B cell (primary cell): ENCODE measurements at regions of chr17 and their contacts with region 1.

Region 1: DNA sequence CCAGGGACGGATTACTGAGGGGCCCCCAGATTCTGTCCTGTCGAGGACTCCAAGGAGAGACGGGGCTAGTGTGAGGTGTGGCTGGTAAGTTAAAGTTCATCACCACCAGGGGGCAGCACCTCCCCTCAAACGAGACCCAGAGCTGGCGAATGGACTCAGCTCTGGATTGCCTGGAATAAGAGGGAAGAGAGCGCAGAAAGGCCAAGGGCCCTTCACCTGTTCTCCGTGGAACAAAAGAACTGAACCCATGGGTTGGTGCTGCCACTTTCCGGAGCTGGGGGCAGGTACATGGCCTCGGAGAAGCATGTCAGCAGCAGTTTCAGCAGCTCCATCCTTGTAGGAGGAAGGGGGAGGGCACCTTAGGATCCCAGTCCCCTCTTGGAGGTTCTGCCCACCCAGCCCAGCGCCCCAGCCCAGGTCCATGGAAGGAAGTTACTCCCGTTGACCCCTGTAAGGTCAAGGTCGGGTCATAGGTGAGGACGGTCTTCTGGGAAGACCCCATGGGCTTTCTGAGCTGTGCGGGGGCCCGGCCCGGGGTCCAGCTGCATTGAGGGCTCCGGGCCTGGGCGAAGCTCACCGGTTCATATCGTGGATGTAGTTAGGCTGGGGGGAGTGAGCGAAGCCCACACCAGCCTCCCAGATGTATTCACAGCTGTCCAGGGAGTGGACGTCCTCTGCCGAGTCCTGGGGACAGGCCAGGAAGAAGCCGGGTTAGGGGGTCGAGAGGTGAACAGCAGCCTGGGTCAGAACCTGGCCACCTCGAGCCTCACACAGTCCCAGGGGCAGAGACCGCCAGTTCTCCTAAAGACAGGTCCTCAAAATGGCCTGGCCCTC is 10.7 kb downstream of the HID1 start:
- DNase-seq: peak; percentile 87
- ATAC-seq: peak; percentile 72
- H3K4me3 ChIP-seq: no peak overlapping the region
- H3K4me3 Mint-ChIP-seq: no peak overlapping the region
- H3K27ac ChIP-seq: no peak overlapping the region
- H3K27ac Mint-ChIP-seq: no peak overlapping the region
- H3K4me1 ChIP-seq: peaks cover 2 to 16% of the 10 kb centered on the region in 2 donors
- H3K4me1 Mint-ChIP-seq: peaks cover 7% of the 10 kb centered on the region
- H3K27me3 ChIP-seq: peaks cover 0 to 9% (median 0%) of the 10 kb centered on the region in 4 experiments
- H3K27me3 Mint-ChIP-seq: peaks cover 11% of the 10 kb centered on the region
- CTCF ChIP-seq: peak; percentile 88

Region 2: DNA sequence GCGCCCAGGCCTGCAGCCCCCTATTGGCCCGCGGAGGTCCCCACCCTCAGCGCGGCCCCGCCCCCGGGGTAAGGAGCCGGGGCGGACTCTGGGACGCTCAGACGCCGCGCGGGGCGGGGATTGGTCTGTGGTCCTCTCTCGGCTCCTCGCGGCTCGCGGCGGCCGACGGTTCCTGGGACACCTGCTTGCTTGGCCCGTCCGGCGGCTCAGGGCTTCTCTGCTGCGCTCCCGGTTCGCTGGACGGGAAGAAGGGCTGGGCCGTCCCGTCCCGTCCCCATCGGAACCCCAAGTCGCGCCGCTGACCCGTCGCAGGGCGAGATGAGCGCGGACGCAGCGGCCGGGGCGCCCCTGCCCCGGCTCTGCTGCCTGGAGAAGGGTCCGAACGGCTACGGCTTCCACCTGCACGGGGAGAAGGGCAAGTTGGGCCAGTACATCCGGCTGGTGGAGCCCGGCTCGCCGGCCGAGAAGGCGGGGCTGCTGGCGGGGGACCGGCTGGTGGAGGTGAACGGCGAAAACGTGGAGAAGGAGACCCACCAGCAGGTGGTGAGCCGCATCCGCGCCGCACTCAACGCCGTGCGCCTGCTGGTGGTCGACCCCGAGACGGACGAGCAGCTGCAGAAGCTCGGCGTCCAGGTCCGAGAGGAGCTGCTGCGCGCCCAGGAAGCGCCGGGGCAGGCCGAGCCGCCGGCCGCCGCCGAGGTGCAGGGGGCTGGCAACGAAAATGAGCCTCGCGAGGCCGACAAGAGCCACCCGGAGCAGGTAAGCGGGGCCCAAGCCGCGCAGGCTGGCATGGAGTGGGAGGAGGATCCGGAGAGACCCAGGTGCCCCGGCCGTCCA is 213.1 kb before region 1 on chr17 and contains the start of gene NHERF1:
- CTCF ChIA-PET with region 1: interaction called, 10 read pairs
- POLR2A ChIA-PET with region 1: no interaction called
- intact Hi-C with region 1: no loop called
- DNase-seq: peak; percentile 95
- ATAC-seq: peak; percentile 95
- H3K4me3 ChIP-seq: peak within 1 kb of the TSS; percentile 51 to 99 (median 90)
- H3K4me3 Mint-ChIP-seq: peak within 1 kb of the TSS; percentile 91
- H3K27ac ChIP-seq: peak within 1 kb of the TSS; percentile 45 to 80
- H3K27ac Mint-ChIP-seq: peak within 1 kb of the TSS; percentile 82
- H3K4me1 ChIP-seq: peaks cover 43 to 56% of the 10 kb centered on the region in 2 donors
- H3K4me1 Mint-ChIP-seq: peaks cover 58% of the 10 kb centered on the region
- H3K27me3 ChIP-seq: no peaks in the 10 kb centered on the region
- H3K27me3 Mint-ChIP-seq: no peaks in the 10 kb centered on the region
- CTCF ChIP-seq: no peak
- total RNA-seq, gene NHERF1: 69.5 and 81.8 TPM in 2 replicates

Region 3: GRCh38 chr17:74972107-74972972 is 10.5 kb after region 1 on chr17 and contains the start of gene HID1:
- CTCF ChIA-PET with region 1: interaction called, 67 read pairs
- POLR2A ChIA-PET with region 1: interaction called, 3 read pairs
- intact Hi-C with region 1: no loop called
- DNase-seq: peak; percentile 84
- ATAC-seq: peak; percentile 93
- H3K4me3 ChIP-seq: peak within 1 kb of the TSS in 4 of 5 experiments; percentile 42 to 66 (median 57)
- H3K4me3 Mint-ChIP-seq: peak within 1 kb of the TSS; percentile 86
- H3K27ac ChIP-seq: no peak within 1 kb of the TSS
- H3K27ac Mint-ChIP-seq: peak within 1 kb of the TSS; percentile 46
- H3K4me1 ChIP-seq: peaks cover 13 to 16% of the 10 kb centered on the region in 2 donors
- H3K4me1 Mint-ChIP-seq: peaks cover 9% of the 10 kb centered on the region
- H3K27me3 ChIP-seq: peaks cover 0 to 48% (median 12%) of the 10 kb centered on the region in 4 experiments
- H3K27me3 Mint-ChIP-seq: peaks cover 24% of the 10 kb centered on the region
- CTCF ChIP-seq: no peak
- total RNA-seq, gene HID1: 1.7 and 3.9 TPM in 2 replicates

Region 4: DNA sequence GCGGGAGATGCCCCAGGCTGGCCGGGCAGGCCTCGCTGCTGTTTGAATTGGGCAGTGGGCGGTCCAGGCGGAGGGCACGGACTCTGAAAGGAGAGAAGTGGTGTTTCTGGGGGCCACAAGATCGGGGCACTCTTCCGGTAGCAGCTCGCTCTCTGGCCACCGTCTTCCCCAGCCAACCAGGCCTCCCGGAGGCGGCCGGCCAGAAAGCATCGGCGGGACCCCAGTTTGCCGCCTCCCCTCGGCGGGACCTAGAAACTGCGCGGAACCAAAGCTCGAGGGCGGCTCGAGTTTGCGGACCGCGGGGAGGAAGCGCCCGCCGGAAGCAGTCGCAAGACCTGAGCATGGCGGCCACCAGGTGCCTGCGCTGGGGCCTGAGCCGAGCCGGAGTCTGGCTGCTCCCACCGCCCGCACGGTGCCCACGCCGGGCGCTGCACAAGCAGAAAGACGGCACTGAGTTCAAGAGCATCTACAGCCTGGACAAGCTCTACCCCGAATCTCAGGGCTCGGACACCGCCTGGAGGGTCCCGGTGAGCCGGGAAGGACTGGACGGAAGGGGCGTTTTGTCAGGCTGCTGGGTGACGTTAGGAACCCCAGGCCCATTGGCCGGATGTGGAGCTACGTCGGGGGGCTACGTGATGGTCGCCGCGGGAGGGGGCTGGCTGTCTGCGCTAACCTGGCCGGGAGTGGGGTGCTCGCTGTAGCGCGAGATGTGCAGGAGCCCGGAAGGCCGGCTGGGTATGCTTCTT is 50.6 kb after region 1 on chr17 and contains the start of gene MRPL58:
- CTCF ChIA-PET with region 1: interaction called, 56 read pairs
- POLR2A ChIA-PET with region 1: interaction called, 3 read pairs
- intact Hi-C with region 1: loop called (anchors 1 kb)
- DNase-seq: peak; percentile 89
- ATAC-seq: peak; percentile 95
- H3K4me3 ChIP-seq: peak within 1 kb of the TSS; percentile 46 to 86 (median 76)
- H3K4me3 Mint-ChIP-seq: peak within 1 kb of the TSS; percentile 97
- H3K27ac ChIP-seq: peak within 1 kb of the TSS; percentile 30 to 79
- H3K27ac Mint-ChIP-seq: peak within 1 kb of the TSS; percentile 92
- H3K4me1 ChIP-seq: peaks cover 15 to 16% of the 10 kb centered on the region in 2 donors
- H3K4me1 Mint-ChIP-seq: peaks cover 22% of the 10 kb centered on the region
- H3K27me3 ChIP-seq: peaks cover 0 to 4% (median 0%) of the 10 kb centered on the region in 4 experiments
- H3K27me3 Mint-ChIP-seq: no peaks in the 10 kb centered on the region
- CTCF ChIP-seq: peak; percentile 73
- total RNA-seq, gene MRPL58: 20.8 and 23.3 TPM in 2 replicates

Region 5: DNA sequence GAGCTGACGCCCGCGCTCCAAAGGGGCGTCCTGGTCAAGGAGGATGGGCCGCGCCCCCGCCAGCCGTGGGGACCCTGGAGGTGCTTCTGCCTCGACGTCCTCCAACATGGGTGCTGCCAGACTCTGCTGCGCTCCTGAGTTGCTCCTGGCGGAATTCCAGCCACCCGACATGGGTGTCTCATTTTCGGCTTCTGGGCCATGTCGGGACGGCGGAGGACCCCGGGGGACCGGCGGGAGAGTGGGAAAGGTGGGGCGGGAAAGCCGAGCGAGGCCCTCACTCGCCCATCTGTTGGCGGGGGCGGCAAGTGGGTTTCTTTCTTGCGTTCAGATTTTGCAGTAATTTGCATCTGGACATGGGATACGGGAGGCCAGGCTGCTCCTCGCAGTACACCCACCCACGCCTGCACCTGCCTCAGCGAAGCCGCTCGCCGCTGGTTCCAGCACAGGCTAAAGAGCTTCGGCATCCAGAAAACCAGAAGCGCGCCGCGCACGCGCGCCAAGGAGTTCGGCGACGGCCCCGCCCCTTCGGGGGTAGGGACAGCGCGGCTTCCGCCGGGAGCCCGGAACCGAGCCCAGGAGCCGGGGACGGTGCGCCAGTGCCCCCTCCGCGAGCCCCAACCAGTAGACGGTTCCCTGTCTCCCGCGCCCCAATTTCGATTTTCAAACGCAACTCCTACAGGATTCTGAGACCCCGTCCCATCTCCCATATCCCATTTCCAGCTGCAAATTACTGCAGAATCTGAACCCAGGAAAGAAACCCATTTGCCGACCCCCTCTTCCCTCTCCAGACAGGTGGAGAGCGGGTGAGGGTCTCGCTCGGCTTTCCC is 147.7 kb after region 1 on chr17 and contains the start of gene ARMC7:
- CTCF ChIA-PET with region 1: interaction called, 74 read pairs
- POLR2A ChIA-PET with region 1: interaction called, 8 read pairs
- intact Hi-C with region 1: loop called (anchors 1 kb)
- DNase-seq: peak; percentile 92
- ATAC-seq: peak; percentile 80
- H3K4me3 ChIP-seq: peak within 1 kb of the TSS; percentile 80 to 94 (median 84)
- H3K4me3 Mint-ChIP-seq: peak within 1 kb of the TSS; percentile 90
- H3K27ac ChIP-seq: peak within 1 kb of the TSS; percentile 54 to 56
- H3K27ac Mint-ChIP-seq: peak within 1 kb of the TSS; percentile 90
- H3K4me1 ChIP-seq: peaks cover 25 to 29% of the 10 kb centered on the region in 2 donors
- H3K4me1 Mint-ChIP-seq: peaks cover 31% of the 10 kb centered on the region
- H3K27me3 ChIP-seq: peaks cover 0 to 2% (median 0%) of the 10 kb centered on the region in 4 experiments
- H3K27me3 Mint-ChIP-seq: no peaks in the 10 kb centered on the region
- CTCF ChIP-seq: no peak
- total RNA-seq, gene ARMC7: 15.7 and 15.9 TPM in 2 replicates

Region 6: GRCh38 chr17:75238684-75239191 is 276.9 kb after region 1 on chr17:
- CTCF ChIA-PET with region 1: interaction called, 10 read pairs
- POLR2A ChIA-PET with region 1: no interaction called
- intact Hi-C with region 1: loop called (anchors 1 kb)
- DNase-seq: peak; percentile 75
- ATAC-seq: peak; percentile 61
- H3K4me3 ChIP-seq: no peak overlapping the region
- H3K4me3 Mint-ChIP-seq: peak overlapping the region; percentile 33
- H3K27ac ChIP-seq: no peak overlapping the region
- H3K27ac Mint-ChIP-seq: peak overlapping the region; percentile 92
- H3K4me1 ChIP-seq: peaks cover 10 to 40% of the 10 kb centered on the region in 2 donors
- H3K4me1 Mint-ChIP-seq: peaks cover 30% of the 10 kb centered on the region
- H3K27me3 ChIP-seq: no peaks in the 10 kb centered on the region
- H3K27me3 Mint-ChIP-seq: no peaks in the 10 kb centered on the region
- CTCF ChIP-seq: peak; percentile 83